Left colon (tissue), 2 donors: ENCODE measurements at regions of chr10 and their contacts with region 1.

Region 1: GRCh38 chr10:97278491-97278989 is 13.9 kb downstream of the ARHGAP19 start:
- DNase-seq: no peak
- ATAC-seq: peak; percentile 70

Region 2: DNA sequence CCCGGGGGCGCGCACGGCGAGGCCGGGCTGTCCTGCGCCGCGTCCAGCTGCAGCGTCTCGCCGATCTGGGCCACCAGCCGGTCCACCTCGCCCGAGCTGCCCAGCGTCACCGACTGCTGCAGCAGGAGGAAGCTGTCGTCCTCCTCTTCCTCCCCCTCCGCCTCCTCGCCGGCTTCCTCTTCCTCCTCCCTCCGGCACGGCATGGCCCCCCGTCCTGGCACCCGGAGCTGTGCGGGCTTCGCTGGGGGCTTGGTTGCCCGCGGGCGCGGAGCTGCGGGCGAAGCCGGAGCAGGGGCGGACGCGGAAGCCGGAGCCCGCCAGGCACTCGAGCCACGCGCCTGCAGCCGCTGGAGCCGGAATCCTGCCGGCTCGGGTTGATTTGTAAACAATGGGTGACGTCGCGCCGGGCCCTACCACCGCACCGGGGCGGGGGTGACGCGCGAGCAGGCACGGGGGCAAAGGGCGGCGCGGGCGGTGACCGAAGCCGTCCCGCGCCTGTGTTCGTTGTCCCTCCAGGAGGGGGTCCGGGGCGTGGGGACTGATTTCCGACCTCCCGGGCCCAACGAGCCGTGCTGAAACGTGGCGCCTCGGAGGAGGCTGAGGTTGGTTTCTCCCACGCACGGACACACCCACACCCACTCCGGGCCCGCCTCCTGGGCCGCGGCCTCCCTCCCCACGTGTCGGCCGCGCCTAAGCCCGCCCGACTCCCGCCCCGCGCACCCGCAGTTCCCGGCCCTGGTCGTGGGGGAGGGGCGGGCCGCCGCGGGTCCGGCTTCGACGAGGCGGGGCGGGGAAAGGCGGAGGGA is 56.0 kb after region 1 on chr10 and contains the start of gene FRAT2:
- intact Hi-C with region 1: loop called in 1 of 2 experiments (anchors 10 kb)
- DNase-seq: peak; percentile 91 to 93
- ATAC-seq: peak; percentile 82
- total RNA-seq, gene FRAT2: 41.4 to 43.9 TPM

Region 3: GRCh38 chr10:97355571-97355975 is 77.0 kb after region 1 on chr10:
- intact Hi-C with region 1: loop called in 1 of 2 experiments (anchors 10 kb)
- DNase-seq: peak in 1 of 2 donors; percentile 28
- ATAC-seq: peak; percentile 63